AG04449 (cell line): ENCODE measurements at regions of chr1 and their contacts with region 1.

Region 1: GRCh38 chr1:84122780-84123382 is 21.2 kb upstream of the PRKACB start:
- DNase-seq: no peak
- H3K4me3 ChIP-seq: no peak overlapping the region
- CTCF ChIP-seq: peak; percentile 58

Region 2: DNA sequence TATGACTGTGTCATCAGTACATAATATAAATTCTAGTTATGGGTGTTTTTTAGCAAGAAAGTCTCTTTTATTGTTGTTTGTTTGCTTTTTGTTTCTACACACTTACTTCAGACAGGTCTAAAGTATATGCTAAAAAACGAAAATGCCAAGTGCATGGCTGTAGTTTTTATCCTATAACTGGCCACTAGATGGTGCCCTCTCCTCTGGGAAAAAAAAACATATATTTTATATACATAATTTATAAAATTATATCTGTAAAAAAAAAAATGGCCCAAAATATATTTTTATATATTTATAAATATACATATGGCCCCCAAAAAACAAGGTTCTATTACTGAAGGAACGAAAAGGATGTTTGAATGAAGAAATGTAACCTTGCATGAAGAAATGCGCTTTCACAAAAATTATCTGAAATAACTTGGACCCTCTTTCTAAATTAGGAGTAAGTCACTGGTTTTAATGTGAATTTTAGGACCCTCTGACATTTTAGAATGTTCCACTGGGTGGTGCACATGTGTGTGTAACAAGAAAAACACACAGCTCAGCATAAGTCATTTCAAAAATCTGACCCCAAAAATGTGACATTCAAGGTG is 217.5 kb before region 1 on chr1:
- CTCF ChIA-PET with region 1: interaction called, 43 read pairs
- POLR2A ChIA-PET with region 1: no interaction called
- DNase-seq: no peak
- H3K4me3 ChIP-seq: no peak overlapping the region
- CTCF ChIP-seq: peak; percentile 42

Region 3: DNA sequence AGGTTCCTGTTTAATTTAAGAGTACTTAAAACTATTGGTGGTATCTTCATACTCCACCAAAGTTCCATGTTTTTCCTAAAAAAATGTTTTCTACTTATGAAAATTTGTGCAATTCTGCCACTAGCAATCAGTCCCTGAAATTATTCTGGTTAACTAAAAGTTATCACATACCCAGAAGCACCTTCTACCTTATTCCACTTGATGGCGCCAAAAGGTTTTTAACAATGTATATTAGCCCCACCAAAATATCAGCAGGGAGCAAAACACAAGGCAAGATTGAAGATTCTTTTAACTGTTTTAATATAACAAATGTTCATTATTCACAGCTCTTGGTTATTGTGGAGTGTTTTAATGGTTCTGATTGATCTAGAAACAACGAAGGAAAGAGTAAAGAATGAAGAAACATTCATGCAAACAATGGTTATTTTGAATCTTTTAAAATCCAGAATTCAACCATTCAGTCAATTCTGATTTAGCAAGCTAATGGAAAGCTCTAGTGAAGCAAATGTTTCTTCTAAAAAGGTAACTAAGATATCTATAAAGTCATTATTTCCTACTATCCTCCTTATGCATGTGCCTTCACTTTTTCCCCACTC is 191.1 kb before region 1 on chr1:
- CTCF ChIA-PET with region 1: interaction called, 313 read pairs
- POLR2A ChIA-PET with region 1: no interaction called
- DNase-seq: no peak
- H3K4me3 ChIP-seq: no peak overlapping the region
- CTCF ChIP-seq: peak; percentile 44

Region 4: DNA sequence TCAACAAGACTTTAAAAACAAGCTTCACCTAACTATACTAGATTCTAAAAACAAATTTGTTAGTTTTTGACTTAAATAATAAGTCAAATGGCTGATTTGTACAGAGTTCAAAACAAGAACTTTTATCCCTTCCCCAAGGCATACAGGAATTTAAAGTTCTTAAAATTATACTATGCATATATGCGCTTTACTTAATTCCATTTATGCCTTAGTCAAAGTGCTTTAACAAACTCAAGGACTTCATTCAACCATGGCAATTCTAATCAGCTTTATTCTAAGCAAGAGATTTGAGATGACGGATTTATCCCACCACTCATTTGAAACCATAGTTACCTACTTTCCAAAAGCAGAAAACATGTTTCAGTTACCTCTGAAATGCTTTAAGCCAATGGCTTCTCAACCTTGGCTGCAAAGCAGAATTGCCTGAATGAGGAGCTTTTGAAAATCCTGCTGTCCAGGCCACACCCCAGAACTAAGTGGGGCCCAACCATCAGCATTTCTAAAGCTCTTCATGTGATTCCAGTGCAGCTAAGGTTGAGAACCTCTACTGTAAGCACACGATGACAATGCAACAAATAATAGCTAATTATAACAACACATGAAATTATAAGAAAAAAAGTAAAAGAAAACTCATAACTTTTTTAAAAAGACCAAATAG is 168.6 kb before region 1 on chr1:
- CTCF ChIA-PET with region 1: interaction called, 10 read pairs
- POLR2A ChIA-PET with region 1: no interaction called
- DNase-seq: no peak
- H3K4me3 ChIP-seq: no peak overlapping the region
- CTCF ChIP-seq: no peak

Region 5: DNA sequence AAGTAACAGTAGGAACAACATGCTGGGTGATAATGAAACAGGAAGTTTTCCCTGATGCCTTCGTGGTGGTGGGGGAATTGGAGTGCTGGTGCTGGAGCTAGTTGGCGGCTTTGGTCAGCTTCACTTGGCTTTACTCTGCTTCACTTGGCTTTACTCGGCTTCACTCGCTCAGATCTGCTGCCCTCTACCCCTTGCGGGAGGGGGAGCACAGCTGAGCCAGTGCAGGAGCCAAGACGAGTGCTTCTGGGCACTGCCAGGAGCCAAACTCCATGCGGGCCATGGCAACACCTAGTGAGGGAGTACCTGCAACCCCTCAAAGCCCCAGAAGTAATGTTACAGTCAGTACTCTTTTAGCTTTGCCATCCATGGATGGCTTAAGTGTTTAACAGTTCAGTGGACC is 10.6 kb after region 1 on chr1:
- CTCF ChIA-PET with region 1: interaction called, 18 read pairs
- POLR2A ChIA-PET with region 1: no interaction called
- DNase-seq: no peak
- H3K4me3 ChIP-seq: no peak overlapping the region
- CTCF ChIP-seq: no peak

Region 6: GRCh38 chr1:84148758-84149157 is 25.9 kb after region 1 on chr1:
- CTCF ChIA-PET with region 1: no interaction called
- POLR2A ChIA-PET with region 1: no interaction called
- DNase-seq: no peak
- H3K4me3 ChIP-seq: no peak overlapping the region
- CTCF ChIP-seq: no peak

Region 7: GRCh38 chr1:84181350-84182005 is 58.6 kb after region 1 on chr1:
- CTCF ChIA-PET with region 1: no interaction called
- POLR2A ChIA-PET with region 1: no interaction called
- DNase-seq: no peak
- H3K4me3 ChIP-seq: no peak overlapping the region
- CTCF ChIP-seq: no peak